HEK293 (cell line): ENCODE measurements at regions of chr6 and their contacts with region 1.

Region 1: GRCh38 chr6:36615018-36615761 is 21.0 kb downstream of the SRSF3 start:
- H3K4me3 ChIP-seq: no peak overlapping the region
- H3K27ac ChIP-seq: no peak overlapping the region
- H3K4me1 ChIP-seq: no peaks in the 10 kb centered on the region
- CTCF ChIP-seq: peak; percentile 83

Region 2: GRCh38 chr6:36666726-36667591 is 51.8 kb after region 1 on chr6:
- CTCF ChIA-PET with region 1: interaction called, 13 read pairs
- POLR2A ChIA-PET with region 1: interaction called, 4 read pairs
- H3K4me3 ChIP-seq: no peak overlapping the region
- H3K27ac ChIP-seq: peak overlapping the region; percentile 80
- H3K4me1 ChIP-seq: peaks cover 15% of the 10 kb centered on the region
- CTCF ChIP-seq: peak; percentile 19; the same call in 1 of the 2 replicates

Region 3: GRCh38 chr6:36724514-36725390 is 109.6 kb after region 1 on chr6:
- CTCF ChIA-PET with region 1: interaction called, 26 read pairs
- POLR2A ChIA-PET with region 1: interaction called, 4 read pairs
- H3K4me3 ChIP-seq: no peak overlapping the region
- H3K27ac ChIP-seq: no peak overlapping the region
- H3K4me1 ChIP-seq: no peaks in the 10 kb centered on the region
- CTCF ChIP-seq: peak; percentile 77

Region 4: GRCh38 chr6:36780442-36781177 is 165.4 kb after region 1 on chr6:
- CTCF ChIA-PET with region 1: interaction called, 16 read pairs
- POLR2A ChIA-PET with region 1: interaction called, 3 read pairs
- H3K4me3 ChIP-seq: no peak overlapping the region
- H3K27ac ChIP-seq: no peak overlapping the region
- H3K4me1 ChIP-seq: no peaks in the 10 kb centered on the region
- CTCF ChIP-seq: no peak

Region 5: DNA sequence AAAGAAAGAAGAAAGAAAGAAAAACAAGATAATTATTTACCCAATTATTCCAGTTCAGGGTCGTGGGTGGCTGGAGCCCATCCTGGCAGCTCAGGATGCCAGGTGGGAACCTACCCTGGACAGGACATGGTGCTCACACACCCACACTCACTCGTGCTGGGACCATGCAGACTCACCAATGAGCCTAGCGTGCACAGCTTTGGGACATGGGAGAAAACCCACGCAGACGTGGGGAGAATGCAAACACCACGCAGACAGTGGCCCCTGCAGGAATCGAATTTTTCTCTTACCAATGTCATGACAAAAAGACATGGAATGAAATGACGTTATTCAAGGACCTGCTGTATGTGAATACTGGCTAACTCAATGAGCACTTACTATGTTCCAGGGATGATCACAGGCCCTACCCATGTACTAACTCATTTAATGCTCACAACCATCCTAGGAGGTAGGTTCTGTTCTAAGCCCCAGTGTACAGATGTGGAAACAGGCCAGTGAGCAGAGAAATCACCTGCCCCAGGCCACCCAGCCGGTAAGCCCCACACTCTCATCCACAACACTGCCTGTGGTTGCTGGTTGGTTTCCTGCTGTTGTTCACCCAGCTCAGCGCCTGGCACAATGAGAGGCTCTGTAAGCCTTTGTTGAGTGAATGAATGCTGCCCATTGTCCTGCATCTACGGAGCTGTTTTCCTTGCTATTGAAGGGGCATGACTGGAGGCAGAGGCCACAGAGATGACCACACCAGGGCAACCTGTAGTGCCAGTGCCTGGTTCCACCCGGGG is 332.6 kb after region 1 on chr6:
- CTCF ChIA-PET with region 1: no interaction called
- POLR2A ChIA-PET with region 1: no interaction called
- H3K4me3 ChIP-seq: no peak overlapping the region
- H3K27ac ChIP-seq: no peak overlapping the region
- H3K4me1 ChIP-seq: no peaks in the 10 kb centered on the region; the same call in 1 of the 2 replicates
- CTCF ChIP-seq: no peak